Activated T-helper 2 cell treated with anti-CD3 and anti-CD28 coated beads, Interferon-gamma antibody, Interleukin-2, Interleukin-4, amounts not matched to agents 10 μg/mL and 5 μg/mL and 100 μg/mL, durations not matched to agents 14 hours and 24 hours and 36 hours (primary cell): ENCODE measurements at regions of chr6 and their contacts with region 1.

Region 1: DNA sequence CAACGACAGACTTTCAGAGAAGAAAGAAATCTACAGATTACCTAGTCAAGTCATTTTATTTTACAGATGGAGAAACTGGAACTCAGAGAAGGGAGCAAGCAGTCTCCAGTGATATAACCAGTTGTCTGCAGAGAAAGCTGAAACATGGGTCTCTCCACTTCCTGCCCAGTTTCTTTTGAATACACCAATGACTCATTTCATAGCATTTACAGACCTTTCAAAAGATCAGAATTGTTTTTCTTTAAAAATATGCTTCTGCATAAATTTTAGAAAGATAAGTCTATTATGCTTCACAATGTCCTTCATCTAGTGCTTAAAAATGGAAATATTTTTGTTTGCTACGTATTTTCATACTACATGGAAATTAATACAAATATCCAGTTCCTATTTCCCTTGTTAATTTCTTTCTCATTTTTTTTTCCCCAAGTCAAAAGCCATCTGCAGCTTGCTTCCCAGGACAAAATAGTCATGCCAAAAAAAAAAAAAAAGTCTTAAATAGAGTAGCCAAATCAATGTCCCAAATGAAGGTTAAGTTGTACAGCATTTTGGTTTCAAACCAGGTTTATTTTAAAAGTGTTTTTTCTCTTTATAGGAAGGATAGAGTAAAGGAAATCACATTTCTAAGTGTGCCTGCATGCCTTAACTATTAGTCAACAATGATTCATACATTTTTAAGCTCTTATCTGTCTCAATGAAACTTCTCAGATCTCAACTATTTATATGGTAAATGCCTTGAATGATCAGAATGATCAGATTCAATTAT is 36.9 kb downstream of the ARHGAP18 start:
- DNase-seq: no peak
- H3K4me3 Mint-ChIP-seq: peak overlapping the region; percentile 61
- H3K27ac Mint-ChIP-seq: peak overlapping the region; percentile 90
- H3K4me1 Mint-ChIP-seq: peaks cover 52% of the 10 kb centered on the region
- H3K27me3 Mint-ChIP-seq: no peaks in the 10 kb centered on the region

Region 2: DNA sequence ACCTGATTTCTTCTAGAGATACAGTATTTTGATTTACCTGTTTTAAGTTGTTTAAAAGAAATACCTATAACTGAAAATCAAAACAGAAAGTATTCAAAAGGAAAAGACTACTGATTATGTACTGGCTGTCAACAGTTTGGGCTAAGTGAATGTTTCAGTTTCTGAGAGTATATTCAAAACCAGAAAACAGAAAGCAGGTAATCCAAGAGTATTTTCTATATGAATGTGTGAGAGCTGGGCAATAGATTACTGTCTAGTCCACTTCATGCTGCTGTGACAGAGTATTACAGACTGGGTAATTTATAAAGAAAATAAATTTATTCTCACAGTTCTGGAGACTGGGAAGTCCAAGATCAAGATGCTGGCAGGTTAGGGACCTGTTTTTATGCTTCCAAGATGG is 224.1 kb before region 1 on chr6:
- intact Hi-C with region 1: loop called (anchors 2 kb)
- DNase-seq: no peak
- H3K4me3 Mint-ChIP-seq: no peak overlapping the region
- H3K27ac Mint-ChIP-seq: no peak overlapping the region
- H3K4me1 Mint-ChIP-seq: peaks cover 57% of the 10 kb centered on the region
- H3K27me3 Mint-ChIP-seq: no peaks in the 10 kb centered on the region

Region 3: GRCh38 chr6:129469070-129469662 is 203.9 kb before region 1 on chr6:
- intact Hi-C with region 1: no loop called
- DNase-seq: no peak
- H3K4me3 Mint-ChIP-seq: no peak overlapping the region
- H3K27ac Mint-ChIP-seq: no peak overlapping the region
- H3K4me1 Mint-ChIP-seq: peaks cover 7% of the 10 kb centered on the region
- H3K27me3 Mint-ChIP-seq: peaks cover 11% of the 10 kb centered on the region

Region 4: GRCh38 chr6:129606664-129607063 is 66.4 kb before region 1 on chr6:
- intact Hi-C with region 1: loop called (anchors 1 kb)
- DNase-seq: no peak
- H3K4me3 Mint-ChIP-seq: no peak overlapping the region
- H3K27ac Mint-ChIP-seq: no peak overlapping the region
- H3K4me1 Mint-ChIP-seq: peaks cover 21% of the 10 kb centered on the region
- H3K27me3 Mint-ChIP-seq: no peaks in the 10 kb centered on the region

Region 5: GRCh38 chr6:129709769-129710449 is 36.8 kb after region 1 on chr6 and contains the start of gene ARHGAP18:
- intact Hi-C with region 1: loop called (anchors 1 kb)
- DNase-seq: peak; percentile 71
- H3K4me3 Mint-ChIP-seq: peak within 1 kb of the TSS; percentile 93
- H3K27ac Mint-ChIP-seq: peak within 1 kb of the TSS; percentile 87
- H3K4me1 Mint-ChIP-seq: peaks cover 54% of the 10 kb centered on the region
- H3K27me3 Mint-ChIP-seq: no peaks in the 10 kb centered on the region
- total RNA-seq, gene ARHGAP18: 5.9 and 6.6 TPM in 2 replicates

Region 6: GRCh38 chr6:129766959-129767728 is 94.1 kb after region 1 on chr6:
- intact Hi-C with region 1: loop called (anchors 5 kb)
- DNase-seq: peak; percentile 68
- H3K4me3 Mint-ChIP-seq: peak overlapping the region; percentile 81
- H3K27ac Mint-ChIP-seq: no peak overlapping the region
- H3K4me1 Mint-ChIP-seq: peaks cover 27% of the 10 kb centered on the region
- H3K27me3 Mint-ChIP-seq: peaks cover 64% of the 10 kb centered on the region

Region 7: GRCh38 chr6:130513770-130514169 is 840.7 kb after region 1 on chr6:
- intact Hi-C with region 1: loop called (anchors 10 kb)
- DNase-seq: peak; percentile 76
- H3K4me3 Mint-ChIP-seq: no peak overlapping the region
- H3K27ac Mint-ChIP-seq: peak overlapping the region; percentile 88
- H3K4me1 Mint-ChIP-seq: peaks cover 57% of the 10 kb centered on the region
- H3K27me3 Mint-ChIP-seq: no peaks in the 10 kb centered on the region